Sigmoid colon (tissue), 7 donors: ENCODE measurements at regions of chr12 and their contacts with region 1.

Region 1: GRCh38 chr12:53098982-53099651 is 1.6 kb downstream of the IGFBP6 start:
- DNase-seq: peak; percentile 97
- H3K4me3 ChIP-seq: peak overlapping the region; percentile 38 to 69 (median 58)
- H3K27ac ChIP-seq: peak overlapping the region; percentile 77 to 93 (median 84)
- H3K4me1 ChIP-seq: peaks cover 0 to 33% (median 29%) of the 10 kb centered on the region in 4 donors
- H3K27me3 ChIP-seq: no peaks in the 10 kb centered on the region
- CTCF ChIP-seq: peak; percentile 93 to 98 (median 96)
- EP300 ChIP-seq: no peak
- POLR2A ChIP-seq: peak in 1 of 2 donors; percentile 18

Region 2: DNA sequence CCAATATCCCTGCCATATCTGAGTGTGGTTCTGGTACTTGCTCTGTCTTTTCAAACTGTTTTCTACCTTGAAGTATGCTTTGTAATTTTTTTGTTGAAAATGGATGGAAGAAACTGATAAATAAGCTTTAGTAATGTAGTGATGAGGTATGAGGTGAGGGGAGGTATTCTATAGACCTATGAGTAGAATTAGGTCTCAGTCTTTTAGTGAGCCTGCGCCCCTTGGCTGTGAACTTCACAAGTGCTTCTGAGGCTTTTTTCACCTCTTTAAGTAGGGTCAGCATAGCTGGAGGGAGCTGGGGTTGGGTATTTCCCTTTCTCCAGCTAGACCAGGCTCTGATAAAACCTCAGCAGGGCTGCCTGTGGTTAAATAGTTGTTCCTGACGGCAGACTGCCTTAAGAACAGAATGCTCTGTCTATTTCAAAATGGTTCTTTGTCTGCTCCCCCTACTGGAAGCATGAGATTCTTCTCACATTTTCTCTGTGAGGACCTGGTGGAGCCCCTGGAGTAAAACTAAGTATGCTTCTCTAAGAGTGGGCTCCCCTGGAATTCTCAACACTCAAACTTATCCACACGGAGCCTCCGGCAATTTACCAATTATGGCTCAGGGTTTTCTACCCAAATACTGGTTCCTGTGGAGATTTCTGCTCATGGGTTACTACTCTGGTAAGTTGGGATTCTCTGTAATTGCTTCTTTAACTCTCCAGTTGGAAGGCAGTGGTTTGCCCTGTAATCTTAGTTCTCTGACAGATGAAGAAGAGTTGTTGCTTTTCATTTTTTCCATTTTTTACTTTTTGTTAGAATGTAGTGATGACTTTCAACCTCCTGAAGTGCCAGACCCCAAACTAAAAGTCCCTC is 592.0 kb before region 1 on chr12:
- intact Hi-C with region 1: no loop called
- DNase-seq: no peak
- H3K4me3 ChIP-seq: no peak overlapping the region
- H3K27ac ChIP-seq: no peak overlapping the region
- H3K4me1 ChIP-seq: peaks cover 0 to 9% (median 2%) of the 10 kb centered on the region in 4 donors
- H3K27me3 ChIP-seq: peaks cover 0 to 3% (median 0%) of the 10 kb centered on the region in 3 donors
- CTCF ChIP-seq: peak; percentile 25 to 56 (median 48)
- EP300 ChIP-seq: no peak
- POLR2A ChIP-seq: no peak

Region 3: DNA sequence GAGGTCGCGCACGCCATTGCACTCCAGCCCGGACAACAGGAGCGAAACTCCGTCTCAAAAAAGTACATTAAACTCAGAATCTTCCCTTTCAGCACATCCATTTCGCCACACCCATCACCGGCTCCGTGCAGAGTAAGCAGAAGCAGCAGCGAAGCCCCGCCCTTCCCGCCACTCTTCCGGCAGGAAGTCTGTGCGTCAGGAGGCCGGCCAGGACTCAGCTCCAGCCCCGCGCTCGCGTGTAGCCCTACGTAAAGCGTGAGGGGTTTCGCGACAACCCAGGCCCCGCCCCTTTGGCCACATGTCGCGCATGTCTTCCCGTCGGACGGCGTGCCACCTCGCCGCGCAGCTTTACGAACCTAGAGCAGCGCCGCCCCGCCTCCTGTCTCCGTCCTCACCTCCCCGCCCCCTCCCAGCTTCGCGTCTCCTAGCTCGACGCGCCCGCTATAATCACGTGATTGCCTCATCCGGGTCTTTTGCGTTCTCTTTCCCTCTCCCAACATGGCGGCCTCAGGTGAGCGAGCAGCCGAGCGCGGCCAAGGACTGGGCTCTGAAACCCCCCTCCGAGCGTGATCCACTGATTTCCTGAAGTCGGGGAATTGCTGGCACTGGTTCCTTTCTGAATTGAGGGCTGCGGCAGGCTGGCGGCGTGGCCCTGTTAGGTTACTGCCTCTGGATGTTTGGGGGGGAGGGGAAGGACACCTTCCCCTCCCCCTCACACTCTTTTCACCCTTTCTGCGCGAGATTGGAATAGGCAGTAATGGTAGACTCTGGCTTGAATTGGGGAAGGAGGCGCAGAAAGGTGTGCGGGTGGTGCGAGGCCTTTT is 92.9 kb before region 1 on chr12 and contains the start of gene EIF4B:
- intact Hi-C with region 1: no loop called
- DNase-seq: peak; percentile 100
- H3K4me3 ChIP-seq: peak within 1 kb of the TSS; percentile 82 to 97 (median 88)
- H3K27ac ChIP-seq: peak within 1 kb of the TSS; percentile 92 to 96 (median 94)
- H3K4me1 ChIP-seq: peaks cover 0 to 49% (median 42%) of the 10 kb centered on the region in 4 donors
- H3K27me3 ChIP-seq: no peaks in the 10 kb centered on the region
- CTCF ChIP-seq: no peak
- EP300 ChIP-seq: peak in 2 of 4 donors; percentile 41 to 97
- POLR2A ChIP-seq: peak; percentile 74
- total RNA-seq, gene EIF4B: 475 to 575 (median 524) TPM

Region 4: GRCh38 chr12:53065975-53066931 is 32.9 kb before region 1 on chr12:
- intact Hi-C with region 1: loop called (anchors 1 kb)
- DNase-seq: peak; percentile 95
- H3K4me3 ChIP-seq: no peak overlapping the region
- H3K27ac ChIP-seq: peak overlapping the region; percentile 64 to 83 (median 66)
- H3K4me1 ChIP-seq: peaks cover 0 to 66% (median 48%) of the 10 kb centered on the region in 4 donors
- H3K27me3 ChIP-seq: no peaks in the 10 kb centered on the region
- CTCF ChIP-seq: peak; percentile 82 to 95 (median 90)
- EP300 ChIP-seq: no peak
- POLR2A ChIP-seq: no peak